GM12878 (cell line): ENCODE measurements at regions of chr5 and their contacts with region 1.

Region 1: GRCh38 chr5:111223889-111224563 is at the start of gene CAMK4:
- DNase-seq: no peak
- ATAC-seq: peak; percentile 79
- H3K4me3 ChIP-seq: peak within 1 kb of the TSS; percentile 83
- H3K27ac ChIP-seq: peak within 1 kb of the TSS; percentile 85
- H3K4me1 ChIP-seq: peaks cover 12% of the 10 kb centered on the region
- H3K27me3 ChIP-seq: no peaks in the 10 kb centered on the region
- CTCF ChIP-seq: peak; percentile 12 to 35 (median 32); a peak in 2 of 6 replicates
- EP300 ChIP-seq: no peak
- POLR2A ChIP-seq: peak; percentile 67
- RAD21 ChIP-seq: peak; percentile 36
- polyA plus RNA-seq, gene CAMK4: 13.3 to 15.0 TPM

Region 2: GRCh38 chr5:110738812-110739651 is 485.0 kb before region 1 on chr5 and contains the start of gene SLC25A46:
- CTCF ChIA-PET with region 1: no interaction called
- POLR2A ChIA-PET with region 1: no interaction called
- RAD21 ChIA-PET with region 1: no interaction called
- SMC1A ChIA-PET with region 1: no interaction called
- in situ Hi-C with region 1: loop called (anchors 25 kb)
- intact Hi-C with region 1: no loop called
- DNase-seq: peak; percentile 56
- ATAC-seq: peak; percentile 91
- H3K4me3 ChIP-seq: peak within 1 kb of the TSS; percentile 75
- H3K27ac ChIP-seq: peak within 1 kb of the TSS; percentile 90
- H3K4me1 ChIP-seq: 0 out of 2 replicates have a peak, but pooled peaks cover 3% of the 10 kb centered on the region
- H3K27me3 ChIP-seq: no peaks in the 10 kb centered on the region
- CTCF ChIP-seq: no peak
- EP300 ChIP-seq: no peak
- POLR2A ChIP-seq: peak; percentile 99
- RAD21 ChIP-seq: no peak
- polyA plus RNA-seq, gene SLC25A46: 18.0 to 31.0 TPM

Region 3: DNA sequence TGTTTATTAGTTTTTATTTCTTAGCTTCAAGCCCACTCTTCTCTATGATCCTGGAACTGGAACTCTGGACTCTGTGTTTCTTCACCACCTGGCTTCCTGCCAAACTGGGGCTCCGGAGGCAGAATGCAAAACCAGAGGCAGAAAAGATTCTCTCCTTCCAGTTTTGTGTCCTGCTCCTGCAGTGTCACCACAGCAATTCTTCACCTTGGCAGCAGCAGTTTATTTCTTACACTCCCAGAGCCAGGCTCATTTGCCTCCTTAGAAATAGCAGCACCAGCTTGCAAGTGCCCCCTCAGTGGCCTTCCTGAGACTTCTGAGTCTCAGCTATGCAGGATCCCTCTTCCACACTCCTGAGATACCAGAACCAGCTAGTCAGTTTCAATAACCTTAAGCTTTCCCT is 26.5 kb before region 1 on chr5:
- CTCF ChIA-PET with region 1: interaction called, 12 read pairs
- POLR2A ChIA-PET with region 1: interaction called, 4 read pairs
- RAD21 ChIA-PET with region 1: no interaction called
- SMC1A ChIA-PET with region 1: interaction called, 17 read pairs
- in situ Hi-C with region 1: no loop called
- intact Hi-C with region 1: no loop called
- DNase-seq: no peak
- ATAC-seq: no peak
- H3K4me3 ChIP-seq: no peak overlapping the region
- H3K27ac ChIP-seq: no peak overlapping the region
- H3K4me1 ChIP-seq: peaks cover 13% of the 10 kb centered on the region
- H3K27me3 ChIP-seq: no peaks in the 10 kb centered on the region
- CTCF ChIP-seq: no peak
- EP300 ChIP-seq: no peak
- POLR2A ChIP-seq: no peak
- RAD21 ChIP-seq: no peak

Region 4: DNA sequence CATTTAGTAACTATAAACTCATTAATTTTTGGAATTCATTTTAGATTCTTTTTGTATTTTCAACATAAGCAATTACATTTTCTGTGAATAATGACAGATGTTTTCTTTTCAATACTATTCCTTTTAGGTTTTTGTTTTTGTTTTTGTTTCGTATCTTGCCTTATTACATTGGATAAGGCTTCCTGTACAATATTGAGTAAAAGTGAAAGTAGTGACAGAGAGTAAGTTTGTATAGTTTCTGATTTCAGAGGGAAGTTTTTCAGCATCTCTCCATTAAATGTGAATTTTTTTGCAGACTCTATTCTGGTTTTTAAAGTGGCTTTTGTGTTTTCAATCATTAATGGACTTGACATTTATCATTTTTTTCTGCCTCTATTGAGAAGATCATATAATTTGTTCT is 12.7 kb before region 1 on chr5:
- CTCF ChIA-PET with region 1: interaction called, 4 read pairs
- POLR2A ChIA-PET with region 1: interaction called, 11 read pairs
- RAD21 ChIA-PET with region 1: interaction called, 5 read pairs
- SMC1A ChIA-PET with region 1: interaction called, 21 read pairs
- in situ Hi-C with region 1: no loop called
- intact Hi-C with region 1: no loop called
- DNase-seq: no peak
- ATAC-seq: peak; percentile 95
- H3K4me3 ChIP-seq: no peak overlapping the region
- H3K27ac ChIP-seq: no peak overlapping the region
- H3K4me1 ChIP-seq: no peaks in the 10 kb centered on the region
- H3K27me3 ChIP-seq: no peaks in the 10 kb centered on the region
- CTCF ChIP-seq: no peak
- EP300 ChIP-seq: no peak
- POLR2A ChIP-seq: no peak
- RAD21 ChIP-seq: no peak

Region 5: DNA sequence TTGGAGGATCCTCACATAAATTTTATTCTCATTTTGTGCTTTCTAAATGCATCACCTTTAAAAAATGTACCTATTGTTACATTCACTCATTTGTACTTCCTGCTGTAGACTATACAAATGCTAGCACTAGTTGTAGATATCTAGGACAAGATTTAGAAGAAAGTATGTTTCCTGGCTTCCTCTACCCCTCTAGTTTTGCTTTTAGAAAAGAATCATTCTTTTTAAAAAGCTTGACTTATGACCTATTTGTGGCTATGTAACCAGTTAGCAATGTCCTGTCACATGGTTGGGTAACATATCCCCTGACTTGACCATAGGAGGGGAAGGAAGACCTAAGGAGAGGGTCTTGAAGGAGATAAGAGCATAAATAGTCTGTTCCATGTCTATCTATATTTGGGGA is 13.4 kb after region 1 on chr5:
- CTCF ChIA-PET with region 1: interaction called, 18 read pairs
- POLR2A ChIA-PET with region 1: interaction called, 12 read pairs
- RAD21 ChIA-PET with region 1: interaction called, 6 read pairs
- SMC1A ChIA-PET with region 1: interaction called, 50 read pairs
- in situ Hi-C with region 1: no loop called
- intact Hi-C with region 1: no loop called
- DNase-seq: no peak
- ATAC-seq: peak; percentile 5
- H3K4me3 ChIP-seq: no peak overlapping the region
- H3K27ac ChIP-seq: peak overlapping the region; percentile 79
- H3K4me1 ChIP-seq: peaks cover 45% of the 10 kb centered on the region
- H3K27me3 ChIP-seq: no peaks in the 10 kb centered on the region
- CTCF ChIP-seq: no peak
- EP300 ChIP-seq: no peak
- POLR2A ChIP-seq: no peak
- RAD21 ChIP-seq: no peak

Region 6: DNA sequence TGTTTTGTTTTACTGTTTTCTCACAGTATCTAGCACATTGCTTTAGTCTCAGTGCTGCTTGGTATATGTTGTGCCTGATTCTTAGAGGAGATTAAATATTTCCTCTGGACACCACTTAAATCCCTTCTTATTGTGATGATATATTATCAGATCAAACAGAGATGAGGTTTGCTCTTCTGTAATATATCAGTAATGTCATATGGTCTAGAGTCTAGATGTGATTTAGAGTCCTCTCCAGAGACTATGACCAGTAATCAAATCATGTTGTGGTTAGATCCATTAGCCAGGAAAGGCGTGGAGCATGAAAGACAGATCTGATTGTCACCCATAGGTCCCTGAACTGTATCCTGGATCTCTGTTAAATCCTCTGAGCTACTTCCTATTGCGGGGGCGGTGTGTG is 24.5 kb after region 1 on chr5:
- CTCF ChIA-PET with region 1: interaction called, 263 read pairs
- POLR2A ChIA-PET with region 1: interaction called, 172 read pairs
- RAD21 ChIA-PET with region 1: interaction called, 443 read pairs
- SMC1A ChIA-PET with region 1: interaction called, 608 read pairs
- in situ Hi-C with region 1: no loop called
- intact Hi-C with region 1: no loop called
- DNase-seq: no peak
- ATAC-seq: no peak
- H3K4me3 ChIP-seq: no peak overlapping the region
- H3K27ac ChIP-seq: no peak overlapping the region
- H3K4me1 ChIP-seq: peaks cover 30% of the 10 kb centered on the region
- H3K27me3 ChIP-seq: no peaks in the 10 kb centered on the region
- CTCF ChIP-seq: no peak
- EP300 ChIP-seq: no peak
- POLR2A ChIP-seq: no peak
- RAD21 ChIP-seq: no peak

Region 7: DNA sequence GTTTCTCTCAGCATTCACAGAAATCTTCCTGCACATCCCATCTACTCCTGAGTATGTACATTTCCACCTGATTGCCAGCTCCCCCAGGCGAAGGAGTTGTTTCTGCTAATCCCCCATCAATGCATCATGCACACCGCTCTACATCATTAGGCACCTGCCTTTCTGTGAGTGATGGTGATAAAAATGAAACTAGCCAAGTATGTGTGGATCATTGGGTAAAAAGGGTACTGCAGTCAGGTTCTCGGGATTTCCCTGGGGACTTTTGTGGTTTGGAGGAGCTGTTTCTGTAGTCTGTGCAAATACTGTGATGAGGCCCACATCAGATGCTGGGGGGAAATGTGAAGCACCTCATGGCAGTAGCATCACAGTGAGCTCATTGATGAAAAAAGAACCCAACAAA is 30.6 kb after region 1 on chr5:
- CTCF ChIA-PET with region 1: interaction called, 263 read pairs
- POLR2A ChIA-PET with region 1: interaction called, 172 read pairs
- RAD21 ChIA-PET with region 1: interaction called, 443 read pairs
- SMC1A ChIA-PET with region 1: interaction called, 608 read pairs
- in situ Hi-C with region 1: no loop called
- intact Hi-C with region 1: loop called (anchors 1 kb)
- DNase-seq: peak; percentile 95
- ATAC-seq: peak; percentile 81
- H3K4me3 ChIP-seq: 0 out of 2 replicates have a peak overlapping the region, but pooled peaks have one; percentile 44
- H3K27ac ChIP-seq: peak overlapping the region; percentile 83
- H3K4me1 ChIP-seq: peaks cover 46% of the 10 kb centered on the region
- H3K27me3 ChIP-seq: no peaks in the 10 kb centered on the region
- CTCF ChIP-seq: no peak
- EP300 ChIP-seq: peak; percentile 94
- POLR2A ChIP-seq: peak; percentile 66
- RAD21 ChIP-seq: peak; percentile 30; the same call in 1 of the 2 replicates